BJ (cell line): ENCODE measurements at regions of chr7 and their contacts with region 1.

Region 1: DNA sequence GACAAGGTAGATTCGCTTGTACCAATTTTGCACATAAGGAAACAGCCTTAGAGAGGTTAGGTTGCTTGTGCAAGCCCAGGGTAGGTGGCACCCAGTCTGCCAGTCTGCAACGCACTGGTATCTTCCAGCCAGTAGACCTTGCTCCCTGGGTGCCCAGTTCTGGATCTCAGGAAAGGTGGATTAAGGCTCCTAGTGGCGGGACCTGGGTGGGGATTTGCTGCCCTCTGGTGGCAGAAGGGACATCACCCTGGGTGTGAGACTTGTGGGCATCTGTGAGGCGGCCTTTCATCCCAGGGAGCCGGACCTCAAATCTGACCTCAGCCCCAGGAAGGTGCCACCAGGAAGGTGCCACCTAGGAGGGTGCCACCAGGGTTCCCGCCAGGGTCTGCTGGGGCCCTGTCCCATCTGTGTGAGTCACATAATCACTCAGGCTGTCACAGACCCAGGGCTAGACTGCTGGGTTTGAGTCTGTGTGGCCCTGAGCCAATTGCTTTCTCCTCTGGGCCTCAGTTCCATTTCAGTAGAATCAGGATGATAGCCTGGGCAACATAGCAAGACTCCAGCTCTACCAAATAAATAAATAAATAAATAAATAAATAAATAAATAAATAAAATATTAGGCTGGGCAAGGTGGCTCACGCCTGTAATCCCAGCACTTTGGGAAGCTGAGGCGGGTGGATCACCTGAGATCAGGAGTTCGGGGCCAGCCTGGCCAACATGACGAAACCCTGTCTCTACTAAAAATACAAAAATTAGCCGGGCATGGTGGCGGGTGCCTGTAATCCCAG is 5.3 kb upstream of the PRKRIP1 start:
- DNase-seq: no peak
- H3K4me3 ChIP-seq: no peak overlapping the region
- H3K27me3 ChIP-seq: no peaks in the 10 kb centered on the region
- CTCF ChIP-seq: peak; percentile 92

Region 2: GRCh38 chr7:102097584-102098161 is 293.2 kb before region 1 on chr7:
- CTCF ChIA-PET with region 1: no interaction called
- POLR2A ChIA-PET with region 1: no interaction called
- DNase-seq: peak; percentile 79
- H3K4me3 ChIP-seq: no peak overlapping the region
- H3K27me3 ChIP-seq: no peaks in the 10 kb centered on the region
- CTCF ChIP-seq: no peak

Region 3: GRCh38 chr7:102272075-102272917 is 118.6 kb before region 1 on chr7:
- CTCF ChIA-PET with region 1: interaction called, 46 read pairs
- POLR2A ChIA-PET with region 1: no interaction called
- DNase-seq: no peak
- H3K4me3 ChIP-seq: no peak overlapping the region
- H3K27me3 ChIP-seq: no peaks in the 10 kb centered on the region
- CTCF ChIP-seq: peak; percentile 92

Region 4: DNA sequence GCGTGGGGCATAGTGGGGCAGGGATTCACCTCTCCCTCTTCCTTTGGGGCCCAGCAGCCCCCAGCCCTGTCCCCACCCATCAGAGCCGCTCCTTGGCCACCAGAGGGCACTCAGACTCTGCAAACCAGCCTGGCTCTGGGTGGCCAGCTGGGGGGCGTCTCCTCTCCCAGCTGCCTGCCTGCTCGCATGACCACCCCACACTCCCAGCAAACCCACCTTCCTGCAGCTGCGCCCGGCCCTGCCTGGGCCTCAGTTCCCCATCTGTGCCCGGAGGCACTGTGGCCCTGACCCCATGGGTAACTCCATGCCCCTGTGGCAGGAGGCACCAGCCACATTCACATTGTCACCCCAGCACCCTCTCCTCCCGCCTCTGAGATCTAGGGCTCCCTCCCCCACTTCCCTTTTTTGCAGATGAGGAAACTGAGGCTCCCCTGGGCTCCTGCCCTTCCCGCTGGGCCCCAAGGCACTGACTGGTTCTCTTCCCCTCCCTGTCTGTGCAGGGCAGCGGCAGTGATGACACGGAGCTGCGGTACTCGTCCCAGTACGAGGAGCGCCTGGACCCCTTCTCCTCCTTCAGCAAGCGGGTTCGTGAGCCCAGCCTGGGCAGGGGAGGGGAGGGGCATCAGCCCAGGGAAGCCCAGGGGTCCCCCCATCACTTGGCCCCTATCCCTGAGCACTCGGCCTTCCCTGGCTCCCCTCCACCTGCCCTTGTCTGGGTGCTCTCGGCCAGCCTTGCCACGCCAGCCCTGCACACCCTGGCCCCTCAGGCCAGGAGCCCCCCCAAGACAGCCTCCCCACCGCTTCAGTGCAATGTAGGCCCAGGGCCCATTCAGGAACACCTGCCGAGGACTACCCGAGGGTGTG is 111.1 kb before region 1 on chr7:
- CTCF ChIA-PET with region 1: interaction called, 46 read pairs
- POLR2A ChIA-PET with region 1: no interaction called
- DNase-seq: no peak
- H3K4me3 ChIP-seq: no peak overlapping the region
- H3K27me3 ChIP-seq: no peaks in the 10 kb centered on the region
- CTCF ChIP-seq: peak; percentile 91

Region 5: DNA sequence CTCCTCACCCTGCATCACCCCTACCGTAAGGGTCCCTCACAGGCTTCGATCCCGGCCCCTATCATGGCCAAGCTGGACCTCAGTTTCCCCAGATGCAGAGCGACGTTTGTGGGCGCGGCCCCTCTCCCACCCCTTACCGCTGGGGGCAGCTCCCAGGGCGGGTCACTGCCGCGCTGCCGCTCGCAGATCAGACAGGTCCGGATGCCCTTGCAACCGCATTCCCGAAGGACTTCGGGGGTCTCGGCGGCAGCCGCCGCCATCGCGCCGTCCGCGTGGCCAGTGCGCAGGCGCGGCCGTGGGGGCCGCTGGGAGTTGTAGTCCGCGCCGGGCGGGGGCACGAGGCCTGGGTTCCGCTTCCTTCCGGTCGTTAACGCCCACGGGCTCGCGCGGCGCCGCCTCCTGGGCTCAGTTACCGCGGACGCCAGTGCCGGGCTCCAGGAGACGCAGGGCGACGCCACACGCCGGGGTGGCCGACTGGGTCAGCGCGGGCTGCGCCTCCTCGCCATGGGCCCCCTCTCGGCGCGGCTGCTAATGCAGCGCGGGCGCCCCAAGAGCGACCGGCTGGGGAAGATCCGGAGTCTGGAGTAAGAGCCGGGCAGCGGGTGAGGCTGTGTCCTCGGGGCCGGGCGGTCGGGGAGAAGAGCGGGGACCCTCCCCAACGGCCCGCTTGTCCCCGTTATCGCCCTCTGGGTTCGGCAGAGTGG is 73.8 kb after region 1 on chr7 and contains the starts of genes ALKBH4 and LRWD1:
- CTCF ChIA-PET with region 1: no interaction called
- POLR2A ChIA-PET with region 1: no interaction called
- DNase-seq: peak; percentile 40
- H3K4me3 ChIP-seq: peak within 1 kb of the TSS; percentile 96
- H3K27me3 ChIP-seq: no peaks in the 10 kb centered on the region
- CTCF ChIP-seq: no peak
- polyA plus RNA-seq, gene ALKBH4: 4.5 and 5.9 TPM in 2 replicates
- polyA plus RNA-seq, gene LRWD1: 8.2 and 15.1 TPM in 2 replicates